ENCODE measurements at regions of chr1 and their contacts with region 1.

Region 1: DNA sequence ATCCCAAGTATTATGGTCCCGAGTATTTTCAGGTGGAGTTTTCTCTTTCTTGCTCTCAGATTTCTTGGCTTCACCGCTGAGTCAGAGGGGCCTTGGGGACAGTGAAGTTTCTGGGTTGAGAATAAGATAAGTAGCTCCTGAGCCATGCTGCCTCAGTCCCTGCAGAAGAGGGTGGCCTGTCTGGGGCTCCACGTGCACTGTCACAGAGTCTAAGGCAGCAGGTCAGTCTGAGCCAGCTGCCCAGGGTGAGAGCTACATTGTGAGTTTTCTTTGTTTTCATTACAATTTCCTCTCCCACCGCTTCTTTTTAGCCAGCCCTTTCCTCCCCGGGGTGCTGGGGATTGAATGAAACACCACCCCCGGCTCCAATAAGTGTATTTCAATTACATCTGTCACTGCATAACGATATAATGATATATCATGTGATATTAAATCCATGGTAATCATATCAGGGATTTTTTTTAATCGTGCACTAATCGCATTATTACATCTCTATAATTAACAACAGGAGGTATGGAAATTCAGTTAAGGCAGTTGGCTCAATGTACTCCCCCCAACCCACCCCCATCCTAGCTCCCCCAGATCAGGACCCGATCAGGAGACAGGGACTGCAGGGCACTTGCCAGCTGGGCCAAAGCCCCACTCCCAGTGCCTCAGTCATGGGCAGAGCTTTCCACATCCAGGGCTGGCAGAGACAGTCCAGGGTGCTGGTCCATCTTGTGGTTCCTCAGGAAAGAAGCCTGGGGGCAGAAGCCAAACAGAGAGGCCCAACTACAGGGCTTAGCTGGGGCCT is 43.7 kb downstream of the DMAP1 start:
- DNase-seq: no peak
- ATAC-seq: peak; percentile 34; the same call in 1 of the 3 replicates
- H3K4me3 ChIP-seq: no peak overlapping the region
- H3K27ac ChIP-seq: no peak overlapping the region
- H3K4me1 ChIP-seq: peaks cover 0 to 12% of the 10 kb centered on the region in 2 experiments; a peak in 3 of 5 replicates
- H3K27me3 ChIP-seq: no peaks in the 10 kb centered on the region
- CTCF ChIP-seq: no peak
- EP300 ChIP-seq: no peak
- POLR2A ChIP-seq: no peak
- RAD21 ChIP-seq: no peak

Region 2: DNA sequence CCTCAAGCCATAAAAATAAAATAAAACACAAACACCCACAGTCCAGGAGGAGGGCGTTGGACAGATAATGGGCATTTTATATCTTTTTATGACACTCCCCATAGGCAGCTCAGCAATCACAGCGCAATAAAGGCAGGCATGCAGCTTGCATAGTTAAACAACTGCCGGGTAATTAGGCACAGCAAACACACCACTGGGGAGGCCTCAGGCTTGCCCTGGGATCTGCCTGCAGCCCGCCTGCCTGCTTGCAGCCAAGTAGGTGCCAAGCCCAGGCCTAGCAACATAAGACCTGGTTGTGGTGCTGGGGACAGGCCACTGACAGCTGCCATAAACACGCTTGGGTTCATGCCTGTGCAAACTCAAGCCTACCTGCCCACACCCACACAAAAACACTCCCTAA is 10.5 kb after region 1 on chr1:
- CTCF ChIA-PET with region 1: no interaction called
- POLR2A ChIA-PET with region 1: interaction called, 12 read pairs
- in situ Hi-C with region 1: no loop called
- intact Hi-C with region 1: no loop called
- DNase-seq: no peak
- ATAC-seq: no peak
- H3K4me3 ChIP-seq: no peak overlapping the region
- H3K27ac ChIP-seq: no peak overlapping the region
- H3K4me1 ChIP-seq: peaks cover 5 to 8% of the 10 kb centered on the region in 2 experiments; a peak in 3 of 5 replicates
- H3K27me3 ChIP-seq: no peaks in the 10 kb centered on the region
- CTCF ChIP-seq: no peak
- EP300 ChIP-seq: no peak
- POLR2A ChIP-seq: no peak
- RAD21 ChIP-seq: no peak

Measured in K562 (cell line).